Colonic mucosa (tissue), 4 donors: ENCODE measurements at regions of chr22 and their contacts with region 1.

Region 1: GRCh38 chr22:19353363-19354131 is 62.0 kb upstream of the CLTCL1 start:
- DNase-seq: no peak
- H3K4me3 ChIP-seq: no peak overlapping the region
- H3K27ac ChIP-seq: no peak overlapping the region
- H3K4me1 ChIP-seq: no peaks in the 10 kb centered on the region
- H3K27me3 ChIP-seq: no peaks in the 10 kb centered on the region
- CTCF ChIP-seq: no peak

Region 2: DNA sequence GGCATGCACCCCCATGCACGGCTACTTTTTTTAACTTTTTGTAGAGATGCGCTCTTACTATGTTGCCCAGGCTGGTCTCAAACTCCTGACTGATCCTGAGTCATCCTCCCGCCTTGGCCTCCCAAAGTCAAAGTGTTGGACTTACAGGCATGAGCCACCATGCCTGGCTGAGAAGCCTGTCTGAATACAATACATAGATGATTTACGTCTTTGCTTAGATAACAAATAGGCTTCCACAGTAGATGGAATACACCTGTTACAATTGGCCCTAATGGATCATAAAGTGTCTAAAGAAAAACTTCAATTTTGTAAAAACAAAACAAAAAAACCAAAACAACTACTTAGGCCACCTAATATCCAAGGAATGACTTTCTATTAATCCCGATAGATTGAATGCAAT is 49.0 kb before region 1 on chr22:
- intact Hi-C with region 1: loop called (anchors 5 kb)
- DNase-seq: no peak
- H3K4me3 ChIP-seq: no peak overlapping the region
- H3K27ac ChIP-seq: no peak overlapping the region
- H3K4me1 ChIP-seq: no peaks in the 10 kb centered on the region
- H3K27me3 ChIP-seq: no peaks in the 10 kb centered on the region
- CTCF ChIP-seq: no peak